Calu3 (cell line): ENCODE measurements at regions of chr2 and their contacts with region 1.

Region 1: GRCh38 chr2:234241656-234242458 is 191.4 kb downstream of the SPP2 start:
- DNase-seq: peak; percentile 18
- H3K4me3 Mint-ChIP-seq: peak overlapping the region; percentile 34
- H3K27ac Mint-ChIP-seq: peak overlapping the region; percentile 73
- H3K4me1 Mint-ChIP-seq: peaks cover 56% of the 10 kb centered on the region
- H3K27me3 Mint-ChIP-seq: no peaks in the 10 kb centered on the region
- CTCF ChIP-seq: no peak

Region 2: GRCh38 chr2:234203135-234203984 is 38.5 kb before region 1 on chr2:
- CTCF ChIA-PET with region 1: interaction called, 3 read pairs
- intact Hi-C with region 1: loop called (anchors 5 kb)
- DNase-seq: peak; percentile 51
- H3K4me3 Mint-ChIP-seq: peak overlapping the region; percentile 36
- H3K27ac Mint-ChIP-seq: peak overlapping the region; percentile 95
- H3K4me1 Mint-ChIP-seq: peaks cover 38% of the 10 kb centered on the region
- H3K27me3 Mint-ChIP-seq: peaks cover 1% of the 10 kb centered on the region
- CTCF ChIP-seq: no peak